PC-9 (cell line): ENCODE measurements at regions of chr9 and their contacts with region 1.

Region 1: DNA sequence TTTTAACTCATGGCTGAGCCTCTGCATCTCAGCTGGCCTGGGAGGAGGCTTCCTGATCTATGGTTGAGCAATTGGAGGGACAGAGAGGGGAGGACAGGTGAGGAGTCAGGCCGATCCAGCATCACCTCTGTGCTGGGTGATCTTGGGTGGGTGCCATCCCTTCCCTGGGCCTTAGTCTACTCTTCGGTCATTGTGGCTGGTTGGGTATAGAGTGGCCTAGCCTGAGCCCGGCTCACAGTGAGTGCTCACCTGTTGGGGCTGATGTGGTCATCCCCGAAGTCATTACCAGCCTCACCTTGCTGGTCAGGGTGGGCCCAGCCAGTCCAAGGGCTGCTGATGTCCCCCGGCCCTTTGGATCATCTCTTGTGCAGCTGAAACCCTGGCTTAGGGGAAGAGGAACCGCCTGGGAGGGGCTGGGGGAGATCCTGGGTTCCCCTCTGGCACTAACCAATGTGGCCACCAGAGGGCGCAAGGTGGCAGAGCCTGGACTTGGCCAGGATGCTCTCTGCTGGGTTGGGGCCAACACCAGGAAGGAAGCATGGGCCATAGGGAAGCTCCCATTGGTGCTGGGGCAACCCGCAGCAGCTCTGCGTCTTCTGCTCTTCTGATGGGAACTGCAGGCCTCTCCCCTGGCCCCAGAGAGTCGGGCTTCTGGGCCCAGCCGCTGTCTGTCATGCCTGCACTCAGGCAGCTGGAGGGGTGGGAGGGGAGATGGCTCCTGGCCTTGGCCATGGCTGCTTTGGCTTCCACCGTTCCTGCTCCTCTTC is 17.3 kb upstream of the ODF2 start:
- DNase-seq: peak; percentile 51 to 83
- H3K4me3 ChIP-seq: no peak overlapping the region
- H3K27ac ChIP-seq: no peak overlapping the region
- H3K4me1 ChIP-seq: no peaks in the 10 kb centered on the region
- H3K27me3 ChIP-seq: no peaks in the 10 kb centered on the region
- CTCF ChIP-seq: peak; percentile 93

Region 2: GRCh38 chr9:128106181-128106890 is 332.2 kb before region 1 on chr9:
- CTCF ChIA-PET with region 1: no interaction called
- POLR2A ChIA-PET with region 1: no interaction called
- intact Hi-C with region 1: no loop called
- DNase-seq: no peak
- H3K4me3 ChIP-seq: no peak overlapping the region
- H3K27ac ChIP-seq: no peak overlapping the region
- H3K4me1 ChIP-seq: no peaks in the 10 kb centered on the region
- H3K27me3 ChIP-seq: no peaks in the 10 kb centered on the region
- CTCF ChIP-seq: no peak

Region 3: GRCh38 chr9:128399861-128400260 is 38.7 kb before region 1 on chr9:
- CTCF ChIA-PET with region 1: interaction called, 12 read pairs
- POLR2A ChIA-PET with region 1: no interaction called
- intact Hi-C with region 1: no loop called
- DNase-seq: no peak
- H3K4me3 ChIP-seq: no peak overlapping the region
- H3K27ac ChIP-seq: no peak overlapping the region
- H3K4me1 ChIP-seq: no peaks in the 10 kb centered on the region
- H3K27me3 ChIP-seq: no peaks in the 10 kb centered on the region
- CTCF ChIP-seq: no peak

Region 4: GRCh38 chr9:128600099-128600498 is 161.6 kb after region 1 on chr9:
- CTCF ChIA-PET with region 1: no interaction called
- POLR2A ChIA-PET with region 1: interaction called, 11 read pairs
- intact Hi-C with region 1: no loop called
- DNase-seq: no peak
- H3K4me3 ChIP-seq: no peak overlapping the region
- H3K27ac ChIP-seq: no peak overlapping the region
- H3K4me1 ChIP-seq: no peaks in the 10 kb centered on the region
- H3K27me3 ChIP-seq: no peaks in the 10 kb centered on the region
- CTCF ChIP-seq: no peak